ENCODE measurements at regions of chr19 and their contacts with region 1.

Region 1: DNA sequence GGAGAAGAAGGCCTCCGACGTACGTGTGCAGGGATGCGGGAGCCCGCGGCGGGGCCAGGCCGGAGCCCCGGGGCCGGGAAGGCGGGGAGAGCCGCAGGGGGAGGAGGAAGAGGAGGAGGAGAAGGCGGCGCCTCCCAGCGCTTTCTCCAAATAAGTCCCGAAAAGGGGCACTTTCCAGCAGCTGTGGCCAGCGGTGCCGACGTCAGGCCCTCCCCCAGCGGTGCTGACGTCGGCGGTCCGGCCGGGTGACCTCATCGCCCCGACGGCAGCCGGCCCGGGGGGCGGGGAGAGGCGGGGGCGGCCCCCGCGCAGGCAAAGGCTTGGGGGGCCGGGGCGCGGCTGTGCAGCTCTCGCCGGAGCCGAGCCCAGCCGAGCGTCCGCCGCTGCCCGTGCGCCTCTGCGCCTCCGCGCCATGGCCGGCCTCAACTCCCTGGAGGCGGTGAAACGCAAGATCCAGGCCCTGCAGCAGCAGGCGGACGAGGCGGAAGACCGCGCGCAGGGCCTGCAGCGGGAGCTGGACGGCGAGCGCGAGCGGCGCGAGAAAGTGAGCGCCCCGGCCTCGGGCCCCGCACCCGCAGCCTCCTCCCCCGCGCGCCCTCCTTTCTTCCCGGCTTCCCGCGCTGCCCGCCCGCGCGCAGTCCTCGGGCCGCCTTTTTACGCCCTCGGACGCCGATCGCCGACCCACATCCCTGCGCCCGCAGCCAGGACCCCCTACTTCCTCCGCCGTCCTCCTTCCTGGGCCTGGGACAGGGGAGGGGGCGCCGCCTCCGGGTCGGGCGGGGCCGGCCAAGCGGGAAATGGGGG is at the start of gene TPM4:
- DNase-seq: peak; percentile 96
- ATAC-seq: peak; percentile 80
- H3K4me3 ChIP-seq: peak within 1 kb of the TSS; percentile 97
- H3K27ac ChIP-seq: peak within 1 kb of the TSS; percentile 98
- H3K4me1 ChIP-seq: peaks cover 16% of the 10 kb centered on the region
- H3K27me3 ChIP-seq: no peaks in the 10 kb centered on the region
- CTCF ChIP-seq: no peak
- POLR2A ChIP-seq: peak; percentile 98
- RAD21 ChIP-seq: 0 out of 2 replicates have a peak, but pooled peaks have one; percentile 12
- total RNA-seq, gene TPM4: 1,075 and 1,562 TPM in 2 replicates

Region 2: DNA sequence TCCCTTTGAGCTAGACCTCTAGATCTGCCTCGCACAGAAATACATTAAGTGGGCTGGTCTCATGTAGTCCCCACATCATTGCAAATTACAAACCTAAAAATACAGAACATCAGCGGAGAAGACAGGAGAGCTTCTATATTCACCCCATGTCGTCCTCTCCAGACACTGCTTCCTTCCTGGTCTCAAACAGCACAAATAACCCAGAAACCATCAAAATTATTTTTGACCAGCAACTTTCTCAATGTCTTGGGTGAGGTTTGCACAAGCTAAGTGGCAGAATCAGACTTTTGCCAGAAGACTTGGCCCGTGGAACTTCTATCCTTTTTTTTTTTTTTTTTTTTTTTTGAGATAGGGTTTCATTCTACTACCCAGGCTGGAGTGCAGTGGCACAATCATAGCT is 1465.3 kb before region 1 on chr19:
- CTCF ChIA-PET with region 1: no interaction called
- POLR2A ChIA-PET with region 1: interaction called, 10 read pairs
- dilution Hi-C with region 1: no loop called
- in situ Hi-C with region 1: no loop called
- intact Hi-C with region 1: no loop called
- DNase-seq: no peak
- ATAC-seq: no peak
- H3K4me3 ChIP-seq: no peak overlapping the region
- H3K27ac ChIP-seq: no peak overlapping the region
- H3K4me1 ChIP-seq: no peaks in the 10 kb centered on the region
- H3K27me3 ChIP-seq: no peaks in the 10 kb centered on the region
- CTCF ChIP-seq: no peak
- POLR2A ChIP-seq: no peak
- RAD21 ChIP-seq: no peak

Region 3: DNA sequence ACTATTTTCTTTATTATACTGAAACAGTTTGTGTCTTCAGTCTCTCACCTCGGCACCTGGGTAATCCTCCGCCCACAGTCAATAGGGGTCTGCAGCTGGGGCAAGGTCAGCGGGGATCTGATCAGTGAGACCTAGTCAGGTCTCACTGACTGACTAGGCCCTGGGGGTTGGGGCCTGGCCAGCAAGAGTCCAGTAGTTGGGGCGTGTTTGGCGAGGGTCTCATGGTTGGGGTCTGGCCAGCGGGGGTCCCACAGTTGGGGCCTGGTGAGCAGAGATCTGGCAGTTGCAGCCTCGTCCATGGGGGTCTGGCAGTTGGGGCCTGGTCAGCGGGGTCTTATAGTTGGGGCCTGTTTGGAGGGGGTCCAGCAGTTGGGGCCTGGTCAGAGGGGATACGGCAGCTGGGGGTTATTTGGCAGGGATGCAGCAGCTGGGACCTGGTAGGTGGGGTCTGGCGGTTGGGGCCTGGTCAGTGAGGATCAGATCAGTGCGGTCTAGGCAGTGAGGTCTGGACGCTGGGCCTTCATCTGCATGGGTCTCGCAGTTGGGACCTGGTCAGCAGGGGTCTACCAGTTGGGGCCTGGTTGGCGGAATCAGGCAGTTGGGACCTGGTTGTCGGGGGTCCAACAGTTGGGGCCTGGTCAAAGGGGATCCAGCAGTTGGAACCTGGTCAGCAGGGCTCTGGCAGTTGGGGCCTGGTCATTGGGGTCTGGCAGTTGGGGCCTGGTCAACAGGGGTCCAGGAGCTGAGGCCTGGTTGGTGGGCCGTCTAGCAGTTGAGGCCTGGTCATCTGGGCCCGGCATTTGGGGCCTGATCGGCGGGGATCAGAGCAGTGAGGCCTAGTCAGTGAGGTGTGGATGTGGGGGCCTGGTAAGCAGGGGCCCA is 61.2 kb before region 1 on chr19:
- CTCF ChIA-PET with region 1: no interaction called
- POLR2A ChIA-PET with region 1: interaction called, 17 read pairs
- dilution Hi-C with region 1: no loop called
- in situ Hi-C with region 1: no loop called
- intact Hi-C with region 1: no loop called
- DNase-seq: no peak
- ATAC-seq: no peak
- H3K4me3 ChIP-seq: no peak overlapping the region
- H3K27ac ChIP-seq: no peak overlapping the region
- H3K4me1 ChIP-seq: no peaks in the 10 kb centered on the region
- H3K27me3 ChIP-seq: peaks cover 1% of the 10 kb centered on the region; the same call in 1 of the 2 replicates
- CTCF ChIP-seq: no peak
- POLR2A ChIP-seq: no peak
- RAD21 ChIP-seq: no peak

Region 4: DNA sequence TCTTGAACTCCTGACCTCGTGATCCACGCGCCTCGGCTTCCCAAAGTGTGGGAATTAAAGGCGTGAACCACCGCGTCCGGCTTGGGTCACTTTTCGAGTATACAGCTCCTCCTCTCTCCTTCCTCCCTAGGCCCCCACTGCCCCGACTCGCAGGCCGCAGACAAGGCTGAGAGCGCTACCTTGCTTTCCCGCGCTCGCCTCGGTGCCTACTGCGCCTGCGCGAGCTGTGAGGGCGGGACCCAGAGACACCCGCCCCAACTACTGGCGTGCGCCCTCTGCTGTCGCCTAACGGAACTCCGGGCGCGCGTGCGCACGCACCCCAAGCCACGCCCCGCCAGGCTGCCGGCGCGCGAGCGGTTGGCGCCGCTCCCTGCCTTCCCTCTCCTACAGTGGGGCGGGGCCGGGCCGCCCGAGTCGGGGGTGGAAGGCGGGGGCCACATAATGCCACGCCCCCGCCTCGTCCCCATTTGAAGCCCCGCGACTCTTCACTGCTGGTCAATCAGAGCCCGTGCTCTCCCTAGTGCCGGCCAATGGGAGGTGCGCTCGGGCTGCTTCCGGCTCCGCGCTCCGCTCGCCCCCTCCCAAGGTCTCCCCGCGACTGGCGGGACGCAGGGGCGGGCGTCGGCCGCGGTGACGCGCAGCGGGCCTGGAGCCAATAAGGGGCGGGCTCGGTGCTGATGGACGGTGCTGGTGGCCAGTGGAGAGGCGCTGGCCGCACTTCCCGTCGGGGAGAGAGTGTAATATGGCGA is 35.0 kb after region 1 on chr19 and contains the start of gene RAB8A:
- CTCF ChIA-PET with region 1: no interaction called
- POLR2A ChIA-PET with region 1: interaction called, 4 read pairs
- dilution Hi-C with region 1: no loop called
- in situ Hi-C with region 1: no loop called
- intact Hi-C with region 1: loop called (anchors 1 kb)
- DNase-seq: peak; percentile 99
- ATAC-seq: peak; percentile 95
- H3K4me3 ChIP-seq: peak within 1 kb of the TSS; percentile 76
- H3K27ac ChIP-seq: peak within 1 kb of the TSS; percentile 76
- H3K4me1 ChIP-seq: peaks cover 7% of the 10 kb centered on the region
- H3K27me3 ChIP-seq: no peaks in the 10 kb centered on the region
- CTCF ChIP-seq: peak; percentile 98
- POLR2A ChIP-seq: no peak
- RAD21 ChIP-seq: peak; percentile 54
- total RNA-seq, gene RAB8A: 135 and 158 TPM in 2 replicates

Region 5: DNA sequence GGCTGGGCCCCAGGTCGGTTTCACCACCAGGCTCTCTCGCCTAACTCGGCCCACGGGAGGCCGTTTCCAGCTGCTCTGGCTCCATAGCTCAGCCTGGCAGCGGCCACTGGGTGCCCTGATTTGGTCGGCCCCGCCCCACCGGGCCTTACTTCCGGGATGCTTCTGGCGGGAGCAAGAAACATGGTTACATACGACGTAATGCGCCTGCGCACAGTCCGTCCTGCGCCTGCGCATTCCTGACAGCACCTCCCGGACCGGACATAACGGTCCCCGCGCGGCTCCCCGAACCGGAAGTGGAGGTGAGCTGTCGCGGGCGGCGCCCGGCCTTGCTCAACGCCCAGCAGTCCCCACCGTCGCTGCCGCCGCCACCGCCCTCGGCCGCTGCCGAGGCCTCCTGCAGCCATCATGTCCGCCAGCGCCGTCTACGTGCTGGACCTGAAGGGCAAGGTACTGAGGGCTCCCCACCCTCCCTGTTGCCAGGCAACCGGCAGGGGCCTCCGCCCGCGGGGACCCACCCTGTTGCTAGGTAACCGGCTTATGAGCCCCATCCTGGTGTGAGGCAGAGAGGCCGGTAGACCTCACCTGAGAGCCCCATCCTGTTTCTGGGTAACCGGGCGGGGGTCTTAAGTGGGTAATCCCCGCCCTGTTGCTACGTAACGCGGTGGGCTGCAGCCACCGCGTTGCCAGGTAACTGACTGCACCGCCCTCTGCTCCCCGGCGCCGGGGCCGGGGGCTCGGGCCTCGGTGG is 121.4 kb after region 1 on chr19 and contains the start of gene AP1M1:
- CTCF ChIA-PET with region 1: no interaction called
- POLR2A ChIA-PET with region 1: no interaction called
- dilution Hi-C with region 1: no loop called
- in situ Hi-C with region 1: no loop called
- intact Hi-C with region 1: loop called (anchors 5 kb)
- DNase-seq: peak; percentile 97
- ATAC-seq: peak; percentile 85
- H3K4me3 ChIP-seq: peak within 1 kb of the TSS; percentile 94
- H3K27ac ChIP-seq: peak within 1 kb of the TSS; percentile 97
- H3K4me1 ChIP-seq: peaks cover 11% of the 10 kb centered on the region
- H3K27me3 ChIP-seq: no peaks in the 10 kb centered on the region
- CTCF ChIP-seq: no peak
- POLR2A ChIP-seq: 0 out of 2 replicates have a peak, but pooled peaks have one; percentile 42
- RAD21 ChIP-seq: no peak
- total RNA-seq, gene AP1M1: 85.1 and 85.8 TPM in 2 replicates